ENCODE measurements at regions of chr10 and their contacts with region 1.

Region 1: DNA sequence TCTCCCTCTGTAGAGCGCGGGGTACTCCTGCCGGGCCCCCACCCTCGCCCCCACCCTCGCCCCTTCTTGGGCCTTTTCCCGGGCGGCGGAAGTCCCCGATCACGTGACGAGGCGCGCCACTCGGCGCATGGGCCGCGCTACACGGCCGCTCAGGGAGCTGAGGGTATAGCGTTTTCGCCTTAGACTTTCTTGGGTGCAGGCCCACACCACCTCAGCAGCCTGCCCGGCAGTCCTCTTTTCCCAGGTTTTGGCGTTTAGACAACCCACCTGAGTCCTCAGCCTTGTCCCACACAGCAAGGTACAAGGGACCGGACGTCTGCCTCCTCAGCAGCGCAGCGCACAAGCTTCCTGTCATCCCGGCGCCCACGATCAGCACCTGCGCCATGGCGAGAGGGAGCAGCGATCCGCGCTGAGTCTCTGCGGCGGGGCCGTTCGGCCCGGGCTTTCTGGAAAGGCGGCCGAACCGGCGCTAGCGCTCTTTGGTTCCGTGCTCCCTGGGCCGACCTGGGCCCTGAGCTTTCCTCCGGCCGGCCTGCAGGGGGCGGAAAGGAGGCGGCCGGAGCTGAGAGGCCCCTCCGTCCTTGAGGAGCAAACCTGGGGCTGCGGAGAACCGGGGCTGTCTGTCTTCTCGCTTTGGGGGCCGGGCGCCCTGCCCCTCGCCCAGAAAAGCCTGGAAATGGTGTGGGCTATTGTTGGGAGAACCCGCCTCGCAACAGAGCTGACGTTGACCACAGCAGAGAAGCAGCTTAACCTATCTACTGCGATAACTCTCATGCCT is at the start of gene RNLS:
- DNase-seq: peak; percentile 71
- CTCF ChIP-seq: peak; percentile 94

Region 2: GRCh38 chr10:88598055-88598454 is 15.1 kb after region 1 on chr10:
- CTCF ChIA-PET with region 1: interaction called, 14 read pairs
- POLR2A ChIA-PET with region 1: no interaction called
- DNase-seq: peak; percentile 31
- CTCF ChIP-seq: no peak

Region 3: GRCh38 chr10:88670497-88670896 is 87.5 kb after region 1 on chr10:
- CTCF ChIA-PET with region 1: no interaction called
- POLR2A ChIA-PET with region 1: no interaction called
- DNase-seq: peak; percentile 24
- CTCF ChIP-seq: no peak